CD4-positive, alpha-beta memory T cell (primary cell): ENCODE measurements at regions of chr3 and their contacts with region 1.

Region 1: DNA sequence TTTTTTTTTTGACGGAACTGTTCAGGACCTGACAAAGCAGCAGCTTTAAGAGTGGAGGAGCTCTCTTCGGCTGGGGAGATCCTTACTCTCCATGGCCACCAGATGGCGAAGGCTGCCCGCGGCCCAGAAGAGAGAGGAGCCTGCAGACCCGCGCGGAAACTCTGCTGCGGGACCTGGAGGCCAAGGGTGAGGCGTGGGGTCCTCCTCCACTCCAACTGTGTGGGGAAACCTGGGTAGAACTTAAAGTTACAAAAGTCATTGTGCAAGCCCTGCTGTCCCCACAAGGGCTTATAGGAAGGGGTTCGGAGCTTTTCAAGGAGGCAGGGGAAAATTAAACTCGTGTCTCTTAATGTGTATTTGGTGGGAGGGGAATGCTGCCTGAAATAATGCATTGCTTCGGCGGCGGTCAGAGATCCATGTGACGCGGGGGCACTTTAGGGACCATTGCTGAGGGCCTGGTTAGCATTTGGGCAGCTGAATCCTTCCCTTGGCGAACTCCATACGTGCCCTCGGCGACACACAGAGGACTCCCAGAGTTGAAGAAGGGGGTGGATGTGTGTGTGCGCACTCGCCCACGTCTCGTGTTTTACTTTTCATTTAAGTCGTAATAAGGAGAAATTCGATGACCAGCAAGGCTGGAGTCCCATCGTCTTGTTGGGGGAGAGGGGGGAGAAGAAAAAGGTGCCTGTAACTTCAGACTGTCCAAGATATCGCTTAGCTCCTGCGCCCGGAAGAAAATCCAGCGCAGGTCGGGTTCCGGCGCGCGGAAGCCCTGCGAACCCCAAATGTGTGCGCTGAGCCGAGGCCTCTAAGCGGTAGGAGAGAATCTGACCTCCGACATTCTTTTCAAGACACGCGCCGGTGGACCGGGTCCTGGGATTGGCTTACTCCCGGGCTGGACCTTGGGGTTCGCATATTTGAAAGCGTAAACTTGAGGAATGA is 9.7 kb downstream of the EOMES start:
- DNase-seq: peak; percentile 77 to 80 (median 78)
- H3K4me3 ChIP-seq: peak overlapping the region; percentile 71 to 83
- H3K4me3 Mint-ChIP-seq: peak overlapping the region; percentile 92 to 99 (median 97)
- H3K27ac ChIP-seq: peak overlapping the region; percentile 4
- H3K27ac Mint-ChIP-seq: peak overlapping the region in 6 of 7 donors; percentile 64 to 94 (median 88)
- H3K4me1 ChIP-seq: peaks cover 25% of the 10 kb centered on the region
- H3K4me1 Mint-ChIP-seq: peaks cover 13 to 42% (median 24%) of the 10 kb centered on the region in 4 donors
- H3K27me3 ChIP-seq: peaks cover 18% of the 10 kb centered on the region
- H3K27me3 Mint-ChIP-seq: peaks cover 20 to 25% of the 10 kb centered on the region in 2 donors

Region 2: DNA sequence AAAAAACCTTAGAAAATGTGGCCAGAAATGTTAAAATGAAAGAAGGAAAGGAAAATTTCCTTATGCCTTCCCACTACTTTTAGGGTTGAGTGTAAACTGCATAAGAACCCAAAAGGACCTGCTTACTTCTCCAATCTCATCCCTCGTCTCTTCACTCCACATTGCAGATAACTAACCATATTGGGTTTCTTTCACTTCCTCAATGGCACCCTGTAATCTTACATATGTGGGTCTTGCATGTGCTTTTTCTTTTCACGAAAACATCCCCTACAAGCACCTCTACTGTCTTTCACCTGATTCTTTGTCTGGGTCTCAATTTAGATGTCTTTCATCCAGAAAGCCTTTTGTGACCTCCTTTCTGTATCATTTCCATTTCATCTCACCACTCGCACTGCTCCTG is 13.3 kb before region 1 on chr3:
- CTCF ChIA-PET with region 1: interaction called, 16 read pairs
- POLR2A ChIA-PET with region 1: no interaction called
- intact Hi-C with region 1: no loop called
- DNase-seq: no peak
- H3K4me3 ChIP-seq: no peak overlapping the region
- H3K4me3 Mint-ChIP-seq: no peak overlapping the region
- H3K27ac ChIP-seq: no peak overlapping the region
- H3K27ac Mint-ChIP-seq: no peak overlapping the region
- H3K4me1 ChIP-seq: no peaks in the 10 kb centered on the region
- H3K4me1 Mint-ChIP-seq: no peaks in the 10 kb centered on the region
- H3K27me3 ChIP-seq: no peaks in the 10 kb centered on the region
- H3K27me3 Mint-ChIP-seq: no peaks in the 10 kb centered on the region

Region 3: GRCh38 chr3:27800261-27800660 is 87.9 kb after region 1 on chr3:
- CTCF ChIA-PET with region 1: no interaction called
- POLR2A ChIA-PET with region 1: no interaction called
- intact Hi-C with region 1: no loop called
- DNase-seq: no peak
- H3K4me3 ChIP-seq: no peak overlapping the region
- H3K4me3 Mint-ChIP-seq: no peak overlapping the region
- H3K27ac ChIP-seq: no peak overlapping the region
- H3K27ac Mint-ChIP-seq: no peak overlapping the region
- H3K4me1 ChIP-seq: no peaks in the 10 kb centered on the region
- H3K4me1 Mint-ChIP-seq: peaks cover 0 to 4% (median 2%) of the 10 kb centered on the region in 4 donors
- H3K27me3 ChIP-seq: no peaks in the 10 kb centered on the region
- H3K27me3 Mint-ChIP-seq: no peaks in the 10 kb centered on the region

Region 4: GRCh38 chr3:27861046-27862036 is 148.9 kb after region 1 on chr3:
- CTCF ChIA-PET with region 1: interaction called, 13 read pairs
- POLR2A ChIA-PET with region 1: no interaction called
- intact Hi-C with region 1: no loop called
- DNase-seq: peak in 4 of 5 donors; percentile 34 to 46 (median 42)
- H3K4me3 ChIP-seq: peak overlapping the region in 1 of 2 donors; percentile 2
- H3K4me3 Mint-ChIP-seq: peak overlapping the region in 7 of 8 donors; percentile 27 to 67 (median 50)
- H3K27ac ChIP-seq: peak overlapping the region; percentile 32
- H3K27ac Mint-ChIP-seq: peak overlapping the region; percentile 74 to 93 (median 88)
- H3K4me1 ChIP-seq: peaks cover 41% of the 10 kb centered on the region
- H3K4me1 Mint-ChIP-seq: peaks cover 32 to 56% (median 47%) of the 10 kb centered on the region in 4 donors
- H3K27me3 ChIP-seq: no peaks in the 10 kb centered on the region
- H3K27me3 Mint-ChIP-seq: no peaks in the 10 kb centered on the region

Region 5: GRCh38 chr3:28089527-28089897 is 377.1 kb after region 1 on chr3:
- CTCF ChIA-PET with region 1: interaction called, 6 read pairs
- POLR2A ChIA-PET with region 1: no interaction called
- intact Hi-C with region 1: loop called (anchors 1 kb)
- DNase-seq: no peak
- H3K4me3 ChIP-seq: no peak overlapping the region
- H3K4me3 Mint-ChIP-seq: no peak overlapping the region
- H3K27ac ChIP-seq: no peak overlapping the region
- H3K27ac Mint-ChIP-seq: peak overlapping the region in 1 of 7 donors; percentile 58
- H3K4me1 ChIP-seq: no peaks in the 10 kb centered on the region
- H3K4me1 Mint-ChIP-seq: peaks cover 0 to 4% (median under 1%) of the 10 kb centered on the region in 4 donors
- H3K27me3 ChIP-seq: no peaks in the 10 kb centered on the region
- H3K27me3 Mint-ChIP-seq: no peaks in the 10 kb centered on the region

Region 6: GRCh38 chr3:28241221-28242160 is 529.1 kb after region 1 on chr3 and contains the start of gene CMC1:
- CTCF ChIA-PET with region 1: interaction called, 24 read pairs
- POLR2A ChIA-PET with region 1: interaction called, 6 read pairs
- intact Hi-C with region 1: loop called (anchors 1 kb)
- DNase-seq: peak; percentile 81 to 92 (median 83)
- H3K4me3 ChIP-seq: peak within 1 kb of the TSS; percentile 82 to 83
- H3K4me3 Mint-ChIP-seq: peak within 1 kb of the TSS; percentile 93 to 97 (median 96)
- H3K27ac ChIP-seq: peak within 1 kb of the TSS; percentile 73
- H3K27ac Mint-ChIP-seq: peak within 1 kb of the TSS; percentile 47 to 96 (median 93)
- H3K4me1 ChIP-seq: peaks cover 51% of the 10 kb centered on the region
- H3K4me1 Mint-ChIP-seq: peaks cover 36 to 62% (median 43%) of the 10 kb centered on the region in 4 donors
- H3K27me3 ChIP-seq: no peaks in the 10 kb centered on the region
- H3K27me3 Mint-ChIP-seq: no peaks in the 10 kb centered on the region
- total RNA-seq, gene CMC1: 15.9 to 18.4 TPM

Region 7: GRCh38 chr3:28295898-28296490 is 583.6 kb after region 1 on chr3:
- CTCF ChIA-PET with region 1: interaction called, 13 read pairs
- POLR2A ChIA-PET with region 1: no interaction called
- intact Hi-C with region 1: no loop called
- DNase-seq: no peak
- H3K4me3 ChIP-seq: no peak overlapping the region
- H3K4me3 Mint-ChIP-seq: peak overlapping the region in 6 of 8 donors; percentile 0 to 78 (median 37)
- H3K27ac ChIP-seq: no peak overlapping the region
- H3K27ac Mint-ChIP-seq: peak overlapping the region in 4 of 7 donors; percentile 9 to 57 (median 32)
- H3K4me1 ChIP-seq: peaks cover 8% of the 10 kb centered on the region
- H3K4me1 Mint-ChIP-seq: peaks cover 14 to 26% (median 19%) of the 10 kb centered on the region in 4 donors
- H3K27me3 ChIP-seq: no peaks in the 10 kb centered on the region
- H3K27me3 Mint-ChIP-seq: no peaks in the 10 kb centered on the region

Region 8: DNA sequence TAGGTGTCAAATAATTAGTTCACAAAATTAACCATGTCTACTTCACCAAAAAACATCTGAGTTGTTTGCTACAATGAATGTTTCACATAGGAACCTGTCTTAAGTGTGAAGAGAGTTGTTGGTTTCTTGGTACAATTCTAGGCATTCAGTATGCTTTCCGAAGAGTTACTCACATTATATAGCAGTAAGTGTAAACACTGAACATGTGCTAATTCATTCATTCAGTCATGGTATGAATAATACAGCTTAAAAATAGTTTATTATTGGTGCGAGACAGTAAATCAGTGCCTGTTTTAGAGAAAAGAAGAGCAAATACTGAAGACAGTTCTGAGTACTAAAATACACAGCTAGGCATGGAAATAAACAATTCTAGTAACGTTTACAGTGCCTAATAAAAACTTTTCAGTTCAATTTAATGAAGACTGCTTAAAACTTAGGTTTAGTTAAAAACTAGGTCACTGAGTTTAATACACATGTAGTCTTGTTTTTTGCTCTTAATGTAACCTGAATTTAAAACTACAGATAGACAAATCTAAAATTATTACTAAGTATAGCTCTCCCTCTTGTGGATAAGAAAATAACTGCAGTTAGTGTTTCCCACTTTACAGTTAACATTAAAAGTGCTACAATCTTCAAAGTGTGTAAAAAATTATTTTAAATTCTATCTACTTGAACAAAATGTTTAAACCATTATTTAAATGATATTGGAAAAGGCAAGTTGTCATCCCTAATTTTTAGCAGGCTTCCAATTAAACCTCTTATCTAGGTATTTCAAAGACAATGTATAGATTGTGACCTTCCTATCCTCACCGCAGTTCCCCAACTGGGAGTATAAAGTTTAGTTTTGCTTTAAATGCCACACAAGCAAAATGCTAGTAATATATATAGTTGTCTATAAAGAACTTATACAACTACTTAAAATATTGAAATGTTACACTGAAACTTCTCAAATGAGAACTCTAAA is 616.1 kb after region 1 on chr3:
- CTCF ChIA-PET with region 1: interaction called, 328 read pairs
- POLR2A ChIA-PET with region 1: interaction called, 36 read pairs
- intact Hi-C with region 1: loop called (anchors 1 kb)
- DNase-seq: peak in 4 of 5 donors; percentile 51 to 62 (median 53)
- H3K4me3 ChIP-seq: no peak overlapping the region
- H3K4me3 Mint-ChIP-seq: no peak overlapping the region
- H3K27ac ChIP-seq: no peak overlapping the region
- H3K27ac Mint-ChIP-seq: peak overlapping the region in 2 of 7 donors; percentile 42 to 55
- H3K4me1 ChIP-seq: peaks cover 21% of the 10 kb centered on the region
- H3K4me1 Mint-ChIP-seq: peaks cover 12 to 27% (median 19%) of the 10 kb centered on the region in 4 donors
- H3K27me3 ChIP-seq: no peaks in the 10 kb centered on the region
- H3K27me3 Mint-ChIP-seq: no peaks in the 10 kb centered on the region